PC-3 (cell line): ENCODE measurements at regions of chr9 and their contacts with region 1.

Region 1: GRCh38 chr9:3467593-3468219 is 58.1 kb downstream of the RFX3 start:
- DNase-seq: peak; percentile 55
- ATAC-seq: peak; percentile 94
- H3K4me3 ChIP-seq: no peak overlapping the region
- H3K27ac ChIP-seq: no peak overlapping the region
- H3K4me1 ChIP-seq: 0 out of 2 replicates have a peak, but pooled peaks cover 3% of the 10 kb centered on the region
- H3K27me3 ChIP-seq: no peaks in the 10 kb centered on the region
- CTCF ChIP-seq: peak; percentile 89

Region 2: GRCh38 chr9:3074247-3074646 is 393.5 kb before region 1 on chr9:
- CTCF ChIA-PET with region 1: no interaction called
- POLR2A ChIA-PET with region 1: no interaction called
- intact Hi-C with region 1: no loop called
- DNase-seq: peak; percentile 2
- ATAC-seq: no peak
- H3K4me3 ChIP-seq: no peak overlapping the region
- H3K27ac ChIP-seq: no peak overlapping the region
- H3K4me1 ChIP-seq: no peaks in the 10 kb centered on the region
- H3K27me3 ChIP-seq: no peaks in the 10 kb centered on the region
- CTCF ChIP-seq: no peak

Region 3: DNA sequence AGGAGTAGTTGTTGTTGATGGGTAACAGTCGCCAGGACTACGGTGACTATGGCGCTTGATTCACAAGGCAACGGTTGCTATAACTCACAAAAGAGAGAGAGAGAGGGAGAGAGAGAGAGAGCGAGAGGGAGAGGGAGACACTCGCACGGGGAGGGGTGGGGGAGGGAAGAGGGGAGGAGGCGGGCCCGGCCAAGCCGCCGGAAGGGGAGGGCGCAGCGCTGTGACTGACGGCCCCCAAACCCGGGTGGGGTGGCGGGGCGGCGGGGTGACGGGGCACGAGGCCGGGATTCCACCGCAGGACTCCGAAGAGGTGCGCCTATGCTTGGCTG is 58.1 kb after region 1 on chr9 and contains the start of gene RFX3:
- CTCF ChIA-PET with region 1: interaction called, 4 read pairs
- POLR2A ChIA-PET with region 1: no interaction called
- intact Hi-C with region 1: loop called (anchors 1 kb)
- DNase-seq: peak; percentile 79
- ATAC-seq: peak; percentile 66
- H3K4me3 ChIP-seq: peak within 1 kb of the TSS; percentile 82
- H3K27ac ChIP-seq: peak within 1 kb of the TSS; percentile 100
- H3K4me1 ChIP-seq: peaks cover 11% of the 10 kb centered on the region; the same call in 1 of the 2 replicates
- H3K27me3 ChIP-seq: no peaks in the 10 kb centered on the region
- CTCF ChIP-seq: no peak
- total RNA-seq, gene RFX3: 2.3 and 4.5 TPM in 2 replicates

Region 4: GRCh38 chr9:3647652-3648051 is 179.9 kb after region 1 on chr9:
- CTCF ChIA-PET with region 1: no interaction called
- POLR2A ChIA-PET with region 1: no interaction called
- intact Hi-C with region 1: loop called (anchors 1 kb)
- DNase-seq: no peak
- ATAC-seq: no peak
- H3K4me3 ChIP-seq: no peak overlapping the region
- H3K27ac ChIP-seq: no peak overlapping the region
- H3K4me1 ChIP-seq: no peaks in the 10 kb centered on the region
- H3K27me3 ChIP-seq: no peaks in the 10 kb centered on the region
- CTCF ChIP-seq: no peak

Region 5: GRCh38 chr9:4366591-4367330 is 899.1 kb after region 1 on chr9:
- CTCF ChIA-PET with region 1: no interaction called
- POLR2A ChIA-PET with region 1: no interaction called
- intact Hi-C with region 1: loop called (anchors 5 kb)
- DNase-seq: peak; percentile 74
- ATAC-seq: 0 out of 2 replicates have a peak, but pooled peaks have one; percentile 14
- H3K4me3 ChIP-seq: no peak overlapping the region
- H3K27ac ChIP-seq: no peak overlapping the region
- H3K4me1 ChIP-seq: peaks cover 8% of the 10 kb centered on the region; the same call in 1 of the 2 replicates
- H3K27me3 ChIP-seq: no peaks in the 10 kb centered on the region
- CTCF ChIP-seq: peak; percentile 80